ENCODE measurements at regions of chr12 and their contacts with region 1.

Region 1: DNA sequence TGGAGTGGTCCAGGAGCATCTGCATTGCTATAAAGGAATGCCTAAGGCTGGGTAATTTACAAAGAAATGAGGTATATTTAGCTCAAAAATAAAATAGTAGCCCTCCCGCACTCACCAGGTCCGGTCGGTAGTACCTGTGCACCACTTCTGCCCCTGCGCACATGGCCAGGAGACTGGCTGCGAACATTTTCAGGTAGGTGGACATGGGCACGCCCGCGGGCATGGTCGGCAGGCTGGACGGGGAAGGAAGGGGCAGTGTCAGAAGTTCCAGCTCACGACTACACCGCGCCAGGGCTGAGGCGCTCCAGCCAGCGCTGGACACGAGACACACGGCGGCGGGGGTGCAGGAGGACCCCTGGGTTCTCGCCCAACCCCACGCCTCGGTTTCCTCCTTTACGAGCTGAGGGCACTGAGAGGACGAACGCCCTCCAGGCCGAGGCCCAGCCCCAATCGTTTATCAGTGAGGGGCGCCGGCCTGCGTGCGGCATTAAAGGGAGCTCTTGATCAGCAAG is 9.1 kb upstream of the TDG start:
- DNase-seq: peak; percentile 15
- H3K4me3 Mint-ChIP-seq: peak overlapping the region; percentile 92
- H3K27ac Mint-ChIP-seq: peak overlapping the region; percentile 93
- H3K4me1 Mint-ChIP-seq: peaks cover 48% of the 10 kb centered on the region
- H3K27me3 Mint-ChIP-seq: no peaks in the 10 kb centered on the region

Region 2: DNA sequence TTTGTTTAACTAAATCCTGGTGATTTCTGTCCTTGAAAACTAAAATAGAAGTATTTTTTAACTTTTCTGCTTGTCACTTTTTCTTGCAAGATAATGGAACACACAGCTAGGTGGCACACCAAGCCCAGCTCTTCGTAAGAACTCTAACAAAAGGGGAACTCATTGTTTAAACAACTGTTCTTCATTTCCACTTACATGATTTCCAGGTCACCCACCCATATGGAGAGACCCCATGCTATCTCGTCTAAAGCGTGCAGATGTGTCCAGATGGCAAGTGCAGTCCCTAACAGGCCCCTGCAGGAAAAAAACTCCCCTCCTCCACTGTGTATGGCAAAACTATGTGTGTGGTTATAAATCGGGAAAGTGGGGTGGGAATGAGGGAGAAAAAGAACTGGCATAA is 72.3 kb before region 1 on chr12:
- CTCF ChIA-PET with region 1: interaction called, 3 read pairs
- intact Hi-C with region 1: loop called (anchors 1 kb)
- DNase-seq: peak; percentile 75
- H3K4me3 Mint-ChIP-seq: no peak overlapping the region
- H3K27ac Mint-ChIP-seq: no peak overlapping the region
- H3K4me1 Mint-ChIP-seq: peaks cover 22% of the 10 kb centered on the region
- H3K27me3 Mint-ChIP-seq: no peaks in the 10 kb centered on the region

Region 3: DNA sequence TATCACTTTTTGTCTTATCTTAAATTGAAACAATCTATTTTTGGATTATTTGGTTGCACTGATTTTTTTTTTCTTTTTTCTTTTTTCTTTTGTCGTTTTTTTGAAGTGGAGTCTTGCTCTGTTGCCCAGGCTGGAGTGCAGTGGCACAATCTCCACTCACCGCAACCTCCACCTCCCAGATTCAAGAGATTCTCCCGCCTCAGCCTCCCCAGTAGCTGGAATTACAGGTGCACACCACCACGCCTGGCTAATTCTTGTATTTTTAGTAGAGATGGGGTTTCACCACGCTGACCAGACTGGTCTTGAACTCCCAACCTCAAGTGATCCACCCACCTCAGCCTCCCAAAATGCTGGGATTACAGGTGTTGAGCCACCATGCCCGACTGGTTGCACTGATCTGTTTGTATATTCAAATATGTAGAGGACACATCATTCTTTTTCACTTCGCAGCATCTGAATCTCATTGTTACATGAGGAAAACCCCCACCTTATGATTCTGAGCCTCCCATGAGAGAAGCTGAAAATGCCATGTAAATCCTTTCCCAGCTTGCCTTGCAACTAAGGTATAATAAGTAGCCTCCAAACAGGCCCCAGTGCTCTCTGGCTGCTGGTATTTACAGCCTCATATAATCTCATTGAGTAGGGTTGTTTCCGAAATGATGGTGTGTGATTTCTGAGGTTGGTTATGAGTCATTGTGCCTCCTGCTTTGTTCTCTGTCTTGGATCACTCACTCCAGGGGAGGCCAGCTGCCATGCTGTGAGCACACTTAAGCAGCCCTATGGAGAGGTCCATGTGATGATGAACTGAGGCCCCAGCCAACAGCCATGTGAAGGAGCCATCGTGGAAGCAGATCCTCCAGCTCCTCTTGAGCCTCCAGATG is 31.6 kb before region 1 on chr12:
- CTCF ChIA-PET with region 1: interaction called, 6 read pairs
- intact Hi-C with region 1: loop called (anchors 1 kb)
- DNase-seq: peak; percentile 86
- H3K4me3 Mint-ChIP-seq: peak overlapping the region; percentile 69
- H3K27ac Mint-ChIP-seq: peak overlapping the region; percentile 90
- H3K4me1 Mint-ChIP-seq: peaks cover 39% of the 10 kb centered on the region
- H3K27me3 Mint-ChIP-seq: no peaks in the 10 kb centered on the region

Region 4: GRCh38 chr12:104083769-104084475 is 127.3 kb after region 1 on chr12:
- CTCF ChIA-PET with region 1: no interaction called
- intact Hi-C with region 1: loop called (anchors 1 kb)
- DNase-seq: peak; percentile 61
- H3K4me3 Mint-ChIP-seq: no peak overlapping the region
- H3K27ac Mint-ChIP-seq: no peak overlapping the region
- H3K4me1 Mint-ChIP-seq: peaks cover 15% of the 10 kb centered on the region
- H3K27me3 Mint-ChIP-seq: no peaks in the 10 kb centered on the region